ENCODE measurements at regions of chr18 and their contacts with region 1.

Region 1: DNA sequence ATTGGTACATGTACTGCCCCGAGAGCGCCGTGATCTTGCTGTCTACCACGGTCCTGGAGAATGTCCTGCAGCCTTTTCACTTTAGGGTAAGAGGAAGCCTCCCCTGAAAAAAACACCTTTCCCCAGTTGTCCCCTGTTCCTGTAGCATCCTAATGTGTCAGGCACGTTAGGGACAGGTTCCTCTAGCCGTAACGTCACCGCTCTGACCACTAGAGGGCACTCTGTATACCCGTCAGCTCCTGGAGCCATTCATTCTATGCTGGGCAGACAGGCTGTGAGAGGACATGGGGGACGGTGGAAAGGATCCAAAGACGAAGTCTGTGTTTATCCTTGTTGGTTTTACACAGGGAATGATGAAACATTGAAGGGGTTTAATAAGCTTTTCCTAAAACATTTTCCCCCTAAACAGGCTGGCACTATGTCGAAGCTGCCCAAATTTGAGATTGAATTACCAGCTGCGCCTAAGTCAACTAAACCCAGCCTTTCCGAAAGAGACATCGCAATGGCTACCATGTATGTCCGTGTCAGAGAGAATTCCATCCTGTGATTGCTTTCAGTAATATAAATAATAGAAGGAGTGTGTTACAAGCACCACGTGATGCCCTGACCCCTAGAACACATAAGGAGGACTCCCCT is 12.7 kb downstream of the RMC1 start:
- DNase-seq: peak; percentile 89
- H3K4me3 Mint-ChIP-seq: no peak overlapping the region
- H3K27ac Mint-ChIP-seq: peak overlapping the region; percentile 60
- H3K4me1 Mint-ChIP-seq: peaks cover 7% of the 10 kb centered on the region
- H3K27me3 Mint-ChIP-seq: no peaks in the 10 kb centered on the region

Region 2: DNA sequence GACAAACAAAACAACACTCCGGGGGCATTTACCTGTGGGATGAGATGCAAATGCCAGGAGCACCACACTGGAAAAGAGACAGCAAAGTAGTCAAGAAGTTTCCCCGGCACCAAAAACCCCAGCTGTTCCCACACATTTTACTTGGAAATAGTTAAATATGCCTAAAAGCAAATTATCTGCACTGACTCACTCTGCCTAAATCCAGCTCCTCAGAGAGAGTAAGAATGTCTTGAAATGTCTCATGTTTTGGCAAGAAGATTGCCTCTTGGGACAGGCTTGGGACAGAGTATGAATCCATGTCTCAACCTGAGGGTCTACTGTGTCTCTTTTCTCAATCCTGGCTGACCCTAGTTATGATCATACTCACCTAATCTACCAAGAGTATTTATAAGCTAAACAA is 150.4 kb before region 1 on chr18:
- CTCF ChIA-PET with region 1: no interaction called
- intact Hi-C with region 1: no loop called
- DNase-seq: no peak
- H3K4me3 Mint-ChIP-seq: no peak overlapping the region
- H3K27ac Mint-ChIP-seq: no peak overlapping the region
- H3K4me1 Mint-ChIP-seq: no peaks in the 10 kb centered on the region
- H3K27me3 Mint-ChIP-seq: no peaks in the 10 kb centered on the region

Region 3: GRCh38 chr18:23487738-23488570 is 28.1 kb before region 1 on chr18:
- CTCF ChIA-PET with region 1: interaction called, 11 read pairs
- intact Hi-C with region 1: no loop called
- DNase-seq: peak; percentile 84
- H3K4me3 Mint-ChIP-seq: peak overlapping the region; percentile 57
- H3K27ac Mint-ChIP-seq: peak overlapping the region; percentile 86
- H3K4me1 Mint-ChIP-seq: peaks cover 19% of the 10 kb centered on the region
- H3K27me3 Mint-ChIP-seq: no peaks in the 10 kb centered on the region

Region 4: GRCh38 chr18:23540867-23541266 is 24.8 kb after region 1 on chr18:
- CTCF ChIA-PET with region 1: interaction called, 13 read pairs
- intact Hi-C with region 1: loop called (anchors 1 kb)
- DNase-seq: peak; percentile 27
- H3K4me3 Mint-ChIP-seq: peak overlapping the region; percentile 5
- H3K27ac Mint-ChIP-seq: peak overlapping the region; percentile 19
- H3K4me1 Mint-ChIP-seq: peaks cover 35% of the 10 kb centered on the region
- H3K27me3 Mint-ChIP-seq: no peaks in the 10 kb centered on the region

Region 5: DNA sequence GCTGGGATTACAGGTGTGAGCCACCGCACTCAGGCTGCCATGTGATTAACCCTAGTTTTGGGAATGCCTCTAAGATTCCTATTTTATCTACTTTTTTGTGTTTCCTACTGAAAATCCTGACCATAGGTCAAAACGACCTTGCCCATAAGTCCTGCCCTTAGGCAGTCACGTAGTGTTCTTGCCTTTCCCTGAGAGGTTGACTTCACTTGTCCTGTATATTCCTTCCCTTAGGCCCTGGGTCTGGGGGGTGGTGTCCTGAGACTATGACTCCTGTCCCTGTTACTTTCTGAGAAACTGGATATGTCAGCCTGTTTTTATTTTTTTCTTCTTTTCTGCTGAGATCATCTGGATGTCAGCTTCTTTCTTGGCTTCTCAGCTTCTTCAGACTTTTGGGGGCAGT is 88.1 kb after region 1 on chr18:
- CTCF ChIA-PET with region 1: interaction called, 10 read pairs
- intact Hi-C with region 1: no loop called
- DNase-seq: no peak
- H3K4me3 Mint-ChIP-seq: no peak overlapping the region
- H3K27ac Mint-ChIP-seq: no peak overlapping the region
- H3K4me1 Mint-ChIP-seq: no peaks in the 10 kb centered on the region
- H3K27me3 Mint-ChIP-seq: no peaks in the 10 kb centered on the region

Region 6: DNA sequence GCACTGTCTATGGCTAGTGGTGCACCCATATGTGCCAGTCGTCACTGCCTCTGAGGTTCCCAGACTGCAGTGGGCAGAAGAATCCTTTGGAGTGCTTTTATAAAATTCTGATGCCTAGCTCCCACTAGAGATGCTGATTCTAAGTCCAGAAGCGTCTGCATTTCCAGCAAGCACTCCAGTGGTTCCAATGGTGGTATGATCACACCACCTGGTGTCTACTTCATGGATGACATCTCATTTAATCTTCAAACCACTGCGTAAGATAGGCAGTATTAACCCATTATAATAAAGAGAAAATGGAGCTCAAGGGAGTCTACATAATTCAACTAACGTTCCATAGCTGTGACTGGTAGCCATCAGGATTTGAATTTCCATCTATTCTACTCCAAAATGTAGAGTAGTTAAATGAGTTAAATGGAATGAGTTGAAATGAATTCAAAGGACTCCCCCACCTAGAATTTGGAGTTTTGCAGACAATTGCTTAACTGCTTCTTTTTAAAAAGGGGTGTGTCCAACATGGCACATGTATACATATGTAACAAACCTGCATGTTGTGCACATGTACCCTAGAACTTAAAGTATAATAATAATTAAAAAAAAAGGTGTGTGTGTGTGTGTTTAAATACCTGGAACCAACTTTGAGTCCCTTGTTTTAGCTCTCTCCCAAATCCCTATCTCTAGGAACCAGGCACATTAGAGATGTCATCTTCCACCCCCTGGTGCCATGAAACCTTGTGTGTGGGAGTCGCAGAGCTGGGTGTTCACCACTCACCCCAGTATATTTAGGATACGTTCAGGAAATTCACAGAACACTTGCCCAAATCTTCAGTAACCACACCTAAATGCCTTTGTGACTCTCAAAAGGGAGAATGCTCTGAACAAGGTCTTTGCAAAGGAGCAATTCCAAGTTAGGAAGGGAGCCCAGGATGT is 187.3 kb after region 1 on chr18:
- CTCF ChIA-PET with region 1: interaction called, 7 read pairs
- intact Hi-C with region 1: loop called (anchors 5 kb)
- DNase-seq: peak; percentile 26
- H3K4me3 Mint-ChIP-seq: no peak overlapping the region
- H3K27ac Mint-ChIP-seq: no peak overlapping the region
- H3K4me1 Mint-ChIP-seq: no peaks in the 10 kb centered on the region
- H3K27me3 Mint-ChIP-seq: peaks cover 8% of the 10 kb centered on the region